ENCODE measurements at regions of chr4 and their contacts with region 1.

Region 1: DNA sequence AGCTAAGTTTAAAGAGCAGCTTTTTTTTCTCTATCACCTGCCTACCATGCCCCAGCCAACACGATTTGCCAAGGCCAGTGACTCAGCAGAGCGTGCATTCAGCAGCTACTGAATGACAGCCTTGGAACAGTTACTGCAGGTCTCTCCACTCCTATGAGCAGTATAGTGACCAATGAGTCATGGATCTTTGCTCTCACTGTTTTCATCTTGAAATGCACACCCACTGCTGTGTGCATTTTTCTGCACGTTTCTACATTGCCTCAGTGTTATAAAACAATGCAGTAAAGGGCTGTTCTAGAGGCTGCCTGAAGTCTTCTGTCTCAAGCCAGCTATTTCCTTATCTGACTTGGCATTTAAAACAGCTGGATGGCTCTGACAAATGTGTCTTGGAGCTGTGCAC is 66.0 kb upstream of the C4orf54 start:
- DNase-seq: peak; percentile 55 to 58
- ATAC-seq: peak; percentile 81 to 98 (median 95)
- H3K4me3 ChIP-seq: no peak overlapping the region
- H3K27ac ChIP-seq: peak overlapping the region; percentile 5 to 83 (median 63)
- H3K4me1 ChIP-seq: peaks cover 0 to 35% (median 11%) of the 10 kb centered on the region in 9 donors
- H3K27me3 ChIP-seq: no peaks in the 10 kb centered on the region
- CTCF ChIP-seq: no peak

Region 2: GRCh38 chr4:99665983-99666382 is 57.6 kb before region 1 on chr4:
- intact Hi-C with region 1: loop called in 1 of 10 experiments (anchors 5 kb)
- DNase-seq: no peak
- ATAC-seq: no peak
- H3K4me3 ChIP-seq: no peak overlapping the region
- H3K27ac ChIP-seq: no peak overlapping the region
- H3K4me1 ChIP-seq: peaks cover 0 to 39% (median 9%) of the 10 kb centered on the region in 9 donors
- H3K27me3 ChIP-seq: no peaks in the 10 kb centered on the region
- CTCF ChIP-seq: no peak

Measured in heart right ventricle (tissue), 16 donors.